ENCODE measurements at regions of chr7 and their contacts with region 1.

Region 1: GRCh38 chr7:134432296-134433152 is 26.4 kb downstream of the AKR1B1 start:
- DNase-seq: peak; percentile 39 to 74 (median 67)
- ATAC-seq: peak; percentile 94
- H3K4me3 ChIP-seq: peak overlapping the region; percentile 59
- H3K4me3 Mint-ChIP-seq: peak overlapping the region; percentile 79 to 91 (median 86)
- H3K27ac ChIP-seq: peak overlapping the region; percentile 37
- H3K27ac Mint-ChIP-seq: peak overlapping the region; percentile 71 to 93 (median 90)
- H3K4me1 ChIP-seq: peaks cover 4 to 14% of the 10 kb centered on the region in 2 donors
- H3K4me1 Mint-ChIP-seq: peaks cover 12 to 17% (median 15%) of the 10 kb centered on the region in 7 donors
- H3K27me3 ChIP-seq: no peaks in the 10 kb centered on the region
- H3K27me3 Mint-ChIP-seq: peaks cover 0 to 16% (median 0%) of the 10 kb centered on the region in 5 donors

Region 2: GRCh38 chr7:134126966-134127848 is 305.3 kb before region 1 on chr7 and contains the start of gene LRGUK:
- CTCF ChIA-PET with region 1: no interaction called
- POLR2A ChIA-PET with region 1: no interaction called
- intact Hi-C with region 1: loop called in 1 of 2 experiments (anchors 10 kb)
- DNase-seq: peak; percentile 55 to 82 (median 77)
- ATAC-seq: peak; percentile 100
- H3K4me3 ChIP-seq: peak within 1 kb of the TSS; percentile 93
- H3K4me3 Mint-ChIP-seq: peak within 1 kb of the TSS; percentile 80 to 96 (median 88)
- H3K27ac ChIP-seq: no peak within 1 kb of the TSS
- H3K27ac Mint-ChIP-seq: peak within 1 kb of the TSS in 3 of 9 donors; percentile 16 to 65 (median 46)
- H3K4me1 ChIP-seq: peaks cover 3 to 9% of the 10 kb centered on the region in 2 donors
- H3K4me1 Mint-ChIP-seq: peaks cover 15 to 26% (median 18%) of the 10 kb centered on the region in 7 donors
- H3K27me3 ChIP-seq: no peaks in the 10 kb centered on the region
- H3K27me3 Mint-ChIP-seq: peaks cover 20 to 44% (median 23%) of the 10 kb centered on the region in 5 donors
- total RNA-seq, gene LRGUK: 0.22 to 1.0 (median 0.43) TPM

Region 3: DNA sequence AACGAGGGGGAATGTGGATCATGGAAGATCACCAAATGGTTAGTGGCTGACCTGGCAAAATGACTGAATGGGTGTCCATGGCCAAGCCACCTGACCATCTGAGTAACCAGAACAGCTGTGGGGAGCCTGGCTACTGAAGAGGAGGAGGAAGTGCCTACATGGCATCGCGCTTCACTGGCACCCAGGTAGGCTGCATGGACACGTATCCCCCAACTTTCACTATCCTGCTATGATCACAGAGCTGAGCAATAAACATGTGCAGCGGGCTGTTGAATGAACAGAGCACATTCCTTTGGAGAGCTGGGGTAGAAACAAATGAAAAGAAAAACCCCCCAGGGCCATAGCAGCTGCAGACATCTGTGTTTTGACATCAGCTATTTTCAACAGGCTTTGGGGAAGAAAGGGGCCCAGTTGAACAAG is 19.9 kb after region 1 on chr7:
- CTCF ChIA-PET with region 1: interaction called, 13 read pairs
- POLR2A ChIA-PET with region 1: interaction called, 5 read pairs
- intact Hi-C with region 1: no loop called
- DNase-seq: no peak
- ATAC-seq: no peak
- H3K4me3 ChIP-seq: no peak overlapping the region
- H3K4me3 Mint-ChIP-seq: peak overlapping the region in 1 of 10 donors; percentile 10
- H3K27ac ChIP-seq: no peak overlapping the region
- H3K27ac Mint-ChIP-seq: peak overlapping the region in 4 of 9 donors; percentile 1 to 42 (median 41)
- H3K4me1 ChIP-seq: peaks cover 7 to 20% of the 10 kb centered on the region in 2 donors
- H3K4me1 Mint-ChIP-seq: peaks cover 29 to 54% (median 45%) of the 10 kb centered on the region in 7 donors
- H3K27me3 ChIP-seq: no peaks in the 10 kb centered on the region
- H3K27me3 Mint-ChIP-seq: no peaks in the 10 kb centered on the region

Region 4: GRCh38 chr7:134478707-134479106 is 46.2 kb after region 1 on chr7:
- CTCF ChIA-PET with region 1: interaction called, 5 read pairs
- POLR2A ChIA-PET with region 1: no interaction called
- intact Hi-C with region 1: loop called in 1 of 2 experiments (anchors 1 kb)
- DNase-seq: no peak
- ATAC-seq: no peak
- H3K4me3 ChIP-seq: no peak overlapping the region
- H3K4me3 Mint-ChIP-seq: no peak overlapping the region
- H3K27ac ChIP-seq: no peak overlapping the region
- H3K27ac Mint-ChIP-seq: no peak overlapping the region
- H3K4me1 ChIP-seq: no peaks in the 10 kb centered on the region
- H3K4me1 Mint-ChIP-seq: no peaks in the 10 kb centered on the region
- H3K27me3 ChIP-seq: no peaks in the 10 kb centered on the region
- H3K27me3 Mint-ChIP-seq: peaks cover 0 to 11% (median 2%) of the 10 kb centered on the region in 5 donors

Region 5: DNA sequence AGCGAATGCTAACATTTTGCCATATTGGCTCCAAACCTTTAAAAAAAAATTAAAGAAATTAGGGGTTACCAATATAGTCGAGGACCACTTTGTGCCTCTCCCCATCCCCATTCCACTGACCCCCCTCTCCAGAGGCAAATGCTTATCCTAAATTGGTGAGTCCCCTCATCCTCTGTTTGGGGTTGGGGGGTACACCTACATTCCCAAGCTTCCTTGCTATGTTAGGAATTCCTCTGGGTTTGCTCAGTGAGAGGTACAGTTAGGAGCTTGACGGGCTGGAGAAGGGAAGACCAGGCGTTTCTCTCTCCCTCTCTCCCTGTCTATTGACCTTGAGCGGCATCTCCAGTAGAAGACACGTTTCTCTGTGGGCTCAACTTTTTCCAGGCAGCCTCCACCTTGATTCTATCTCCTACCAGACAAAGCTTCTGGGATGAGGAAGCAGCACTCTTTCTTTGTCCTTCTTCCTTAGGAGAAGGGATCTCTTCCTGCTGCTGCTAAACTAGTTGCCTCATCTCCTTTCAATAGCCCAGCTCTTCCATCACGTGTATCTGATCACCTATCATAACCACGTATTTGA is 109.8 kb after region 1 on chr7:
- CTCF ChIA-PET with region 1: interaction called, 44 read pairs
- POLR2A ChIA-PET with region 1: no interaction called
- intact Hi-C with region 1: loop called (anchors 1 kb)
- DNase-seq: no peak
- ATAC-seq: no peak
- H3K4me3 ChIP-seq: no peak overlapping the region
- H3K4me3 Mint-ChIP-seq: no peak overlapping the region
- H3K27ac ChIP-seq: no peak overlapping the region
- H3K27ac Mint-ChIP-seq: no peak overlapping the region
- H3K4me1 ChIP-seq: no peaks in the 10 kb centered on the region
- H3K4me1 Mint-ChIP-seq: peaks cover 0 to 3% (median 0%) of the 10 kb centered on the region in 7 donors
- H3K27me3 ChIP-seq: peaks cover 0 to 4% of the 10 kb centered on the region in 2 donors
- H3K27me3 Mint-ChIP-seq: peaks cover 14 to 35% (median 18%) of the 10 kb centered on the region in 5 donors

Region 6: GRCh38 chr7:134605973-134606923 is 173.7 kb after region 1 on chr7:
- CTCF ChIA-PET with region 1: interaction called, 22 read pairs
- POLR2A ChIA-PET with region 1: no interaction called
- intact Hi-C with region 1: loop called (anchors 1 kb)
- DNase-seq: peak; percentile 20 to 64 (median 50)
- ATAC-seq: peak; percentile 92
- H3K4me3 ChIP-seq: no peak overlapping the region
- H3K4me3 Mint-ChIP-seq: peak overlapping the region in 9 of 10 donors; percentile 6 to 85 (median 61)
- H3K27ac ChIP-seq: no peak overlapping the region
- H3K27ac Mint-ChIP-seq: peak overlapping the region in 1 of 9 donors; percentile 80
- H3K4me1 ChIP-seq: no peaks in the 10 kb centered on the region
- H3K4me1 Mint-ChIP-seq: peaks cover 4 to 6% (median 5%) of the 10 kb centered on the region in 7 donors
- H3K27me3 ChIP-seq: no peaks in the 10 kb centered on the region
- H3K27me3 Mint-ChIP-seq: peaks cover 4 to 48% (median 22%) of the 10 kb centered on the region in 5 donors

Region 7: DNA sequence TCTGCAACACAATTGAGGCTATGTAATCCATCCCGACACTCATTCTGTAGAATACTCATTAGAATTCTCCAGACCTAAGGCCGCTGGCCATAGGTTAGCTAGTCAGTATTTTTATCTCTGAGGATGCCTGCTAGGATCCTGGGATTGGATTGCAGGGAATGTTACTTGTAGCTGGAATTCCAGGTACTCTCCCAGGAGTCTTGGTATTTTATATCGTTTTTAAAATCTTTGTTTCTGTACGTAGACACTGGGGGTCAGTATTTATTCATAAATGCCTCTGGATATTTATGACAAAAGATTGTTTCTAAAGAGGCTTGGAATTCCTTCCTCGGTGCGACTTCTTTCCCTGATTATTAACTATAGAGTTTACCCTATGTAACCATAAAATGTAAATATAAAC is 254.3 kb after region 1 on chr7:
- CTCF ChIA-PET with region 1: no interaction called
- POLR2A ChIA-PET with region 1: no interaction called
- intact Hi-C with region 1: no loop called
- DNase-seq: no peak
- ATAC-seq: no peak
- H3K4me3 ChIP-seq: no peak overlapping the region
- H3K4me3 Mint-ChIP-seq: no peak overlapping the region
- H3K27ac ChIP-seq: no peak overlapping the region
- H3K27ac Mint-ChIP-seq: peak overlapping the region in 1 of 9 donors; percentile 22
- H3K4me1 ChIP-seq: no peaks in the 10 kb centered on the region
- H3K4me1 Mint-ChIP-seq: peaks cover 3 to 12% (median 5%) of the 10 kb centered on the region in 7 donors
- H3K27me3 ChIP-seq: no peaks in the 10 kb centered on the region
- H3K27me3 Mint-ChIP-seq: peaks cover 0 to 3% (median 0%) of the 10 kb centered on the region in 5 donors